HepG2 (cell line): ENCODE measurements at regions of chr11 and their contacts with region 1.

Region 1: GRCh38 chr11:123020968-123021367 is 39.3 kb upstream of the BSX start:
- DNase-seq: peak; percentile 43
- ATAC-seq: peak; percentile 86
- H3K4me3 ChIP-seq: no peak overlapping the region
- H3K27ac ChIP-seq: no peak overlapping the region
- H3K4me1 ChIP-seq: no peaks in the 10 kb centered on the region
- H3K27me3 ChIP-seq: peaks cover 3 to 35% of the 10 kb centered on the region in 2 experiments; a peak in 4 of 5 replicates
- CTCF ChIP-seq: peak; percentile 55
- EP300 ChIP-seq: no peak
- POLR2A ChIP-seq: no peak
- RAD21 ChIP-seq: no peak

Region 2: GRCh38 chr11:122910775-122911174 is 110.2 kb before region 1 on chr11:
- CTCF ChIA-PET with region 1: interaction called, 5 read pairs
- POLR2A ChIA-PET with region 1: no interaction called
- in situ Hi-C with region 1: loop called (anchors 10 kb)
- intact Hi-C with region 1: loop called (anchors 1 kb)
- DNase-seq: peak; percentile 5
- ATAC-seq: no peak
- H3K4me3 ChIP-seq: no peak overlapping the region
- H3K27ac ChIP-seq: no peak overlapping the region
- H3K4me1 ChIP-seq: no peaks in the 10 kb centered on the region
- H3K27me3 ChIP-seq: peaks cover 0 to 22% of the 10 kb centered on the region in 2 experiments; a peak in 3 of 5 replicates
- CTCF ChIP-seq: peak; percentile 57
- EP300 ChIP-seq: no peak
- POLR2A ChIP-seq: no peak
- RAD21 ChIP-seq: no peak